H1 (cell line): ENCODE measurements at regions of chr13 and their contacts with region 1.

Region 1: DNA sequence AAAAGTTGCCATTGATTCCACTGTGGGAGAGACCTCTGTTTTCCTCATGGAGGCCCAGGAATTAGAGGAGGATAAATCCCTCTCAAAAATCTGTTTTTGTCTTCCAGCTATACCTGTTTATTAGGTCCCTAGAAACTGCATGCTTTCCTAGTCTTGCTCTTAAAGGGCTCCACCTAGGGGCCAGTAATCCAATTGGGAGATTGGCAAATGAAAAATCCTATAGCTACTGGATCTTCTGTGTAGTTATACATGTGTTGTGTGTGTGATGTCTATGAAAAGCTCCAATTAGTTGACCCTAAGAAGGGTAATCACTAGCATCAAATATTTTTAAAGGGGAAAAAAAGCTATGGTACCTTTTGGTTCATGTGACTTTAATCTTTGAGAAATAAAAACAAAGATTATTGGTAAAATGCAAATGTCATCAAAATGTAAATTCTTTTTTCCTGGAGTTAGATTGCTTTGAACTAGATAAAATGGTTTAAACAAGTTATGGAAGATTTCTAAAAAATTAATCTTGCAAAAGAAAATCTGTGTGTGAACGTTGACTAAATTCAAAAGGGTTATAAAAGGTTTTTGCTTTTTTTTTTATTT is 63.4 kb upstream of the C1QTNF9B start:
- DNase-seq: no peak
- H3K4me3 ChIP-seq: no peak overlapping the region
- H3K27ac ChIP-seq: no peak overlapping the region
- H3K4me1 ChIP-seq: no peaks in the 10 kb centered on the region
- H3K27me3 ChIP-seq: no peaks in the 10 kb centered on the region
- CTCF ChIP-seq: peak in 2 of 3 experiments; percentile 50 to 65; a peak in 3 of 4 replicates
- EP300 ChIP-seq: no peak
- POLR2A ChIP-seq: no peak
- RAD21 ChIP-seq: peak; percentile 67 to 68

Region 2: GRCh38 chr13:23794267-23795161 is 166.1 kb before region 1 on chr13:
- CTCF ChIA-PET with region 1: no interaction called
- POLR2A ChIA-PET with region 1: no interaction called
- DNase-seq: no peak
- H3K4me3 ChIP-seq: no peak overlapping the region
- H3K27ac ChIP-seq: no peak overlapping the region
- H3K4me1 ChIP-seq: peaks cover 0 to 3% (median 0%) of the 10 kb centered on the region in 4 experiments; a peak in 1 of 7 replicates
- H3K27me3 ChIP-seq: no peaks in the 10 kb centered on the region
- CTCF ChIP-seq: no peak
- EP300 ChIP-seq: no peak
- POLR2A ChIP-seq: no peak
- RAD21 ChIP-seq: no peak

Region 3: GRCh38 chr13:23867027-23867491 is 93.6 kb before region 1 on chr13:
- CTCF ChIA-PET with region 1: no interaction called
- POLR2A ChIA-PET with region 1: no interaction called
- DNase-seq: no peak
- H3K4me3 ChIP-seq: no peak overlapping the region
- H3K27ac ChIP-seq: no peak overlapping the region
- H3K4me1 ChIP-seq: peaks cover 0 to 2% (median 0%) of the 10 kb centered on the region in 4 experiments; a peak in 2 of 7 replicates
- H3K27me3 ChIP-seq: no peaks in the 10 kb centered on the region
- CTCF ChIP-seq: no peak
- EP300 ChIP-seq: no peak
- POLR2A ChIP-seq: no peak
- RAD21 ChIP-seq: no peak

Region 4: GRCh38 chr13:23921451-23921888 is 39.2 kb before region 1 on chr13:
- CTCF ChIA-PET with region 1: interaction called, 37 read pairs
- POLR2A ChIA-PET with region 1: no interaction called
- DNase-seq: peak in 1 of 2 experiments; percentile 54
- H3K4me3 ChIP-seq: peak overlapping the region in 1 of 4 experiments; percentile 38; a peak in 1 of 8 replicates
- H3K27ac ChIP-seq: no peak overlapping the region
- H3K4me1 ChIP-seq: peaks cover 0 to 6% (median 4%) of the 10 kb centered on the region in 4 experiments; a peak in 3 of 7 replicates
- H3K27me3 ChIP-seq: no peaks in the 10 kb centered on the region
- CTCF ChIP-seq: peak in 2 of 3 experiments; percentile 50 to 63; a peak in 2 of 4 replicates
- EP300 ChIP-seq: no peak; a peak in 1 of 3 replicates
- POLR2A ChIP-seq: no peak
- RAD21 ChIP-seq: peak; percentile 85 to 88

Region 5: DNA sequence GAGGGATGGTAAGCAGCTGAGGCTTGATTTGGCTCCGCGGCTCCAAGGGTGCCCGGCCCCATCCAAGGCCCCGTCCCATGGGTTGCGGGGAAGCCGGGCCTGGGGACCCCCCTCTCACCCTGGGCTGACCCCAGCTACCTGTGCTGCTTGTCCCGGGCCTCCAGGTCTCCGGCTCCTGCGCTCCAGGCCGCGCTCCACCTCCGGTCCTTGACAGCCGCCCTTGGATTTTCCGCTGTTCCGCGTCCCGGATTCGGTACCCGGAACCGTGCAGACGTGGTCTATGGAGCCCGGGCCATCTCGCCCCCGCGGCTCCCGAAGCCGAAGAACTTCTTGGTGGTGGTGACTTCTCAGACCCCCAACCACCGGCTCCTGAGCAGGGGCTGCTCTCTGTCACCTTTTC is 15.0 kb before region 1 on chr13:
- CTCF ChIA-PET with region 1: interaction called, 60 read pairs
- POLR2A ChIA-PET with region 1: no interaction called
- DNase-seq: no peak
- H3K4me3 ChIP-seq: no peak overlapping the region
- H3K27ac ChIP-seq: no peak overlapping the region
- H3K4me1 ChIP-seq: no peaks in the 10 kb centered on the region
- H3K27me3 ChIP-seq: no peaks in the 10 kb centered on the region
- CTCF ChIP-seq: no peak
- EP300 ChIP-seq: no peak
- POLR2A ChIP-seq: no peak
- RAD21 ChIP-seq: no peak

Region 6: DNA sequence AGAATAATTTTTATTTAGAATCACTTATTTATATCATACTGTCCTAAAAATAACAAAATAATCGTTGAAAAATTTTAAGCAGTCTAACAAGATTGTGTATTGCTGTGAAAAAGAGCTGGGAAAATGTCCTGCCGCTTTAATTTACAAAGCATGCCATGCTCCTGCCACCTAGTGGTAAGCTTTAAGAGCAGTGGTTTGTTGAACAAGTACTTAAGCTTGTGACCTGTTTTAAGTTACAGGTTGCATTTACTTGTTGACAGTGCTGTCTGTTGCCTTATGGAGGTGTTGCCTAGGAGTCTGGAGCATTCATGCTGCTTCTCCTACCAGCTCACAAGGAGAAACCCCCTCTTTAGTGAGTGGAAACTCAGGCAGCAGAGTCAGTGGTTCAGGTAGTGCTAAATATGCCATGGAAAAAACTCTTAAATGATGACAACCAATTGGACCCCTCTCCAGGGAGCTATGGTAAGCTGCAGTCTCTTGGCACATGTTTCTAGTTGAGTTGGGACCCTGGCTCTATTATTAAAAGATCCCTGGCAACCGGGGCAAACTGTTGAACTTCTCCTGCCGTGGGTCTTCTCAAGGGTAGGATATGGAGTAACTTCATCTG is 268.3 kb after region 1 on chr13:
- CTCF ChIA-PET with region 1: interaction called, 13 read pairs
- POLR2A ChIA-PET with region 1: no interaction called
- DNase-seq: no peak
- H3K4me3 ChIP-seq: no peak overlapping the region
- H3K27ac ChIP-seq: no peak overlapping the region
- H3K4me1 ChIP-seq: peaks cover 0 to 10% (median 0%) of the 10 kb centered on the region in 4 experiments; a peak in 3 of 7 replicates
- H3K27me3 ChIP-seq: no peaks in the 10 kb centered on the region
- CTCF ChIP-seq: peak in 2 of 3 experiments; percentile 74 to 92; a peak in 3 of 4 replicates
- EP300 ChIP-seq: no peak
- POLR2A ChIP-seq: no peak
- RAD21 ChIP-seq: peak; percentile 68 to 77